A673 (cell line): ENCODE measurements at regions of chr15 and their contacts with region 1.

Region 1: GRCh38 chr15:34203936-34204335 is 6.0 kb downstream of the KATNBL1 start:
- DNase-seq: no peak
- H3K4me3 ChIP-seq: no peak overlapping the region
- H3K27ac ChIP-seq: no peak overlapping the region
- H3K4me1 ChIP-seq: peaks cover 4% of the 10 kb centered on the region
- H3K27me3 ChIP-seq: no peaks in the 10 kb centered on the region
- CTCF ChIP-seq: no peak

Region 2: GRCh38 chr15:34126485-34126884 is 77.5 kb before region 1 on chr15:
- CTCF ChIA-PET with region 1: no interaction called
- POLR2A ChIA-PET with region 1: no interaction called
- intact Hi-C with region 1: loop called (anchors 5 kb)
- DNase-seq: no peak
- H3K4me3 ChIP-seq: no peak overlapping the region
- H3K27ac ChIP-seq: no peak overlapping the region
- H3K4me1 ChIP-seq: peaks cover 5% of the 10 kb centered on the region
- H3K27me3 ChIP-seq: no peaks in the 10 kb centered on the region
- CTCF ChIP-seq: no peak

Region 3: GRCh38 chr15:34179234-34179633 is 24.7 kb before region 1 on chr15:
- CTCF ChIA-PET with region 1: no interaction called
- POLR2A ChIA-PET with region 1: no interaction called
- intact Hi-C with region 1: loop called (anchors 2 kb)
- DNase-seq: no peak
- H3K4me3 ChIP-seq: no peak overlapping the region
- H3K27ac ChIP-seq: no peak overlapping the region
- H3K4me1 ChIP-seq: no peaks in the 10 kb centered on the region
- H3K27me3 ChIP-seq: no peaks in the 10 kb centered on the region
- CTCF ChIP-seq: no peak

Region 4: GRCh38 chr15:34223904-34224596 is 20.1 kb after region 1 on chr15:
- CTCF ChIA-PET with region 1: no interaction called
- POLR2A ChIA-PET with region 1: no interaction called
- intact Hi-C with region 1: no loop called
- DNase-seq: peak; percentile 15
- H3K4me3 ChIP-seq: peak overlapping the region; percentile 69
- H3K27ac ChIP-seq: peak overlapping the region; percentile 91
- H3K4me1 ChIP-seq: peaks cover 8% of the 10 kb centered on the region
- H3K27me3 ChIP-seq: no peaks in the 10 kb centered on the region
- CTCF ChIP-seq: no peak

Region 5: GRCh38 chr15:34933432-34933975 is 729.6 kb after region 1 on chr15:
- CTCF ChIA-PET with region 1: no interaction called
- POLR2A ChIA-PET with region 1: no interaction called
- intact Hi-C with region 1: no loop called
- DNase-seq: no peak
- H3K4me3 ChIP-seq: no peak overlapping the region
- H3K27ac ChIP-seq: no peak overlapping the region
- H3K4me1 ChIP-seq: no peaks in the 10 kb centered on the region
- H3K27me3 ChIP-seq: no peaks in the 10 kb centered on the region
- CTCF ChIP-seq: no peak